ENCODE measurements at regions of chr4 and their contacts with region 1.

Region 1: DNA sequence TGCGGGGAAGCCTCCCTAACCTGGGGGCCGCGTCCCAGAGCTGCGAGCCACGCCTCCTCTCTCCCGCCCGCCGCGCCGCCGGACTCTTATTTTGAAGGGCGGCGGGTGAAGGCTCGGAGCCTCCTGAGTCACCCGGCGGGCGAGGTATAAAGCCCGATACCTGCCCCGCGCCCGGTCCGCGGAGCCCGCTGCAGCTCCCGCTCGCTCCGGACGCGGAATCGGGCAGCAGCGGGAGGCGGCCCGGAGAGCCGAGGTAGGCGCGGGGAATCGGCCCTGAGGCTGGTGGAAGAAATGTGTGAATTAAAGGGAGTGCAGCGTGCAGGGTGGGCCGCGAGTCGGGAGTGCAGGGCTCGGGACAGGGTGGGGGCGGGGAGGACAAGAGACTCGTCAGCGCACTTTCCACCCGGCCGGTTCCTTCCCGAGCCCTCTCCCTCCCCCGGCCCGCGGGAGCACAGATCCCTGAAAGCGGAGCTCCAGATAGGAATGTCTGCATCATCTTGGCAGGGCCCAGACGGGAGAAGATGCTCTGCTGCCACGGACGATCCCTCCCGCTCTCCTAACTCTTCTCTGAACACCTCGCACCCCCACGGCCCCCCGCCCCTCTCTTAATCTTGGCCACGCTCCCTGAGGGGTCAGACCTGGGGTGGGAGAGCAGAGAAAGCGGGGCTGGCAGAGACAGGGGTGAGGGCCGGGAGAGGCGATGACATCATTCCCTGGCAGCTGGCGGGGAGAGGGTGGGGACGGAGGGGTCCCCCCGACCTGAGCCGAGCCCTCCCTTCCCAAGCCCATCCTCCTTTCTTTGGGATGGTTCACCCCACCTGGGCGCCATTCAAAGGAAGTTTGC is 177.9 kb downstream of the CBR4 start:
- H3K4me3 Mint-ChIP-seq: peak overlapping the region; percentile 77
- H3K27ac Mint-ChIP-seq: peak overlapping the region; percentile 92
- H3K4me1 Mint-ChIP-seq: peaks cover 50% of the 10 kb centered on the region
- H3K27me3 Mint-ChIP-seq: peaks cover 35% of the 10 kb centered on the region

Region 2: DNA sequence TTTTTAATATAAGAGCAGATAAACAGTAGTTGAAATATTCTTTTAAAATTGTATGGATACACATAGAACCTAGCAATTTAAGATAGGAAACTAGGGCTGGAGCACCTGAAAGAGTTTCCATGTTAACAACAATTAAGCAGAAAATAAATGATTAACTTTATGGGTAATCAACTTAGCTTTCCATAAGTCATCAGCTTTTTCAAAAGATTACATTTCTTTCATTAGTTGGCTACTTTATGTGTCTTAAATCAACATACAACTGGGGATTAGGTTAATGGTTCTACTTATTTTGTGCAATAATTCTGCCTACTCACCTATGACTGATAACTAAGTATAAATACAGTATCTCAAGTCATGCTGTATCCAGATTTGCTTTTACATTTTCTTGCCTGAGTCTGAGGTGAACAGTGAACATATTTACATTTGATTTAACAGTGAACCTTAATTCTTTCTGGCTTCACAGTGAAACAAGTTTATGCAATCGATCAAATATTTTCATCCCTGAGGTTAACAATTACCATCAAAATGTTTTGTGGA is 739.9 kb before region 1 on chr4 and contains the start of gene ANXA10:
- intact Hi-C with region 1: no loop called
- H3K4me3 Mint-ChIP-seq: no peak within 1 kb of the TSS
- H3K27ac Mint-ChIP-seq: no peak within 1 kb of the TSS
- H3K4me1 Mint-ChIP-seq: no peaks in the 10 kb centered on the region
- H3K27me3 Mint-ChIP-seq: no peaks in the 10 kb centered on the region

Region 3: GRCh38 chr4:168731006-168731636 is 101.0 kb before region 1 on chr4:
- intact Hi-C with region 1: loop called (anchors 5 kb)
- H3K4me3 Mint-ChIP-seq: peak overlapping the region; percentile 39
- H3K27ac Mint-ChIP-seq: peak overlapping the region; percentile 82
- H3K4me1 Mint-ChIP-seq: peaks cover 66% of the 10 kb centered on the region
- H3K27me3 Mint-ChIP-seq: peaks cover 11% of the 10 kb centered on the region

Region 4: DNA sequence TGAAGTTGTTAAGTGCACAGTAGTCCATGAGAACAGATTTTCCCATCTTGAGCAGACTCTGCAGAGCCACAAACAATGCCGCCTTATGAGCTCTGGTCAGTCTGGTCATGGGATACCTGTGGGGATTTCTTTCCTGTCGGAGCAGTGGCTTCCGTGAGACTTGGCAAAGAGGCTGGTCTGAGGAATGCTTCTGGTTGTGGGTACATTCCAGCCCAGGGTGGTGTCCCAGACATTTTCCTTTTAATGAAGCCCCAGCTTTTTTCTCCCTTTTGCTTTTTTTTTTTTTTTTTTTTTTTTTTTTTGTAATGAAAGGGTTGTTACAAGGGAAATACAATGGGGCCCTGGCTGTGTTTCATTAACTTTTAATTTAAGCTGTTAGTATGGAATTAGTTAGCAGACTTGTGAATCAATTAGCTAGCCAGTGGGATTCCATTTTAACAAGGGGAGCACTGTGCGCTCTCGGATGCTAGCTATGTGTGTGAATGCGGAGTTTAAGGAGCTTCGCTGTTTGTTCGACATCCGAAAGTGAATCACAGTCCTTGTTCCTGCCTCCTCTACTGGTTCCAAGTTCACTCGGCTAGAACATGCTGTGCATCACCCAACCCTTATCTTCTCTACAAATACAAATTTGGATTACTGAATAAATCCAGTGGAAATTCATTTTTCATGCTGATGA is 47.2 kb before region 1 on chr4:
- intact Hi-C with region 1: no loop called
- H3K4me3 Mint-ChIP-seq: no peak overlapping the region
- H3K27ac Mint-ChIP-seq: no peak overlapping the region
- H3K4me1 Mint-ChIP-seq: peaks cover 18% of the 10 kb centered on the region
- H3K27me3 Mint-ChIP-seq: peaks cover 17% of the 10 kb centered on the region

Region 5: GRCh38 chr4:168797176-168797575 is 35.0 kb before region 1 on chr4:
- intact Hi-C with region 1: loop called (anchors 2 kb)
- H3K4me3 Mint-ChIP-seq: no peak overlapping the region
- H3K27ac Mint-ChIP-seq: peak overlapping the region; percentile 43
- H3K4me1 Mint-ChIP-seq: peaks cover 38% of the 10 kb centered on the region
- H3K27me3 Mint-ChIP-seq: no peaks in the 10 kb centered on the region

Region 6: GRCh38 chr4:168815379-168816345 is 16.5 kb before region 1 on chr4:
- intact Hi-C with region 1: loop called (anchors 2 kb)
- H3K4me3 Mint-ChIP-seq: no peak overlapping the region
- H3K27ac Mint-ChIP-seq: no peak overlapping the region
- H3K4me1 Mint-ChIP-seq: peaks cover 18% of the 10 kb centered on the region
- H3K27me3 Mint-ChIP-seq: peaks cover 16% of the 10 kb centered on the region